Aorta (tissue), 5 donors: ENCODE measurements at regions of chr1 and their contacts with region 1.

Region 1: GRCh38 chr1:66725885-66726665 is 26.2 kb upstream of the DYNLT5 start:
- DNase-seq: peak; percentile 37 to 58
- ATAC-seq: peak; percentile 85
- H3K4me3 ChIP-seq: no peak overlapping the region
- H3K27ac ChIP-seq: no peak overlapping the region
- H3K4me1 ChIP-seq: peaks cover 0 to 3% of the 10 kb centered on the region in 2 donors
- H3K27me3 ChIP-seq: no peaks in the 10 kb centered on the region

Region 2: GRCh38 chr1:66253330-66253921 is 472.6 kb before region 1 on chr1:
- intact Hi-C with region 1: loop called in 1 of 2 experiments (anchors 10 kb)
- DNase-seq: no peak
- ATAC-seq: peak; percentile 91
- H3K4me3 ChIP-seq: no peak overlapping the region
- H3K27ac ChIP-seq: no peak overlapping the region
- H3K4me1 ChIP-seq: no peaks in the 10 kb centered on the region
- H3K27me3 ChIP-seq: no peaks in the 10 kb centered on the region

Region 3: DNA sequence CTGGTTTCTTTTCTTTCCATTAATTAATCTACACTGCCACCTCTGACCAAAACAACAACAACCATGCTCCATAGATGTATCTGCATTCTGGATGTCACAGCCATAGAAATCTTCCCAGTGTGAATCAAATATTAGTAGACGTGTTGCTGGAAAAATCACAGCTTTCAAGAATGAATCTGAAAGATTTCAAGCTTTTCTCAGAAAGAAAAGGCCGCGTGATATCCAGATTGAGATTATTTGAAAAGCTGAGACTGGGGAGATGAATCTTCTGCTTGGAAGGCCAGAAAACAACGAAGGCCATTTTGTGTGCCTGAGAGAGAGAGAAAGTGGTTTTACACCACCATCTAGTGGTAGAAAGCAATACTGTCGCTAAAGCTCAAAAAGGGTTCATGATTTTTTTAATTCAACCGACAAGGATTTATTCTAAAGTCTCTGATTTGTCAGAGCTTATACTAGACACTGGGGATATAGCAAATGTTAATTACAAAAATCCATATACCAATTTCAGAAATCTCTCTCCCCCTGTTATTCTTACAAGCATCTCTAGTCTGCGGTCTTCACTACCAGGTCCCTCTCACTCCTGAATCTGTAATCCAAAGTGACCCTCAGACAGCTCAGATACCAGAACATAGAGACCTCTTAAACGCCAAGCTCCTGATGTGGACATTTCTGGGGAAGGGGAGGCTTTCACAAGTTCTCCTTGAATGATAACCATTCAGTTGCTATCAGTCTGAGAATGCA is 279.6 kb before region 1 on chr1:
- intact Hi-C with region 1: loop called (anchors 5 kb)
- DNase-seq: no peak
- ATAC-seq: peak; percentile 88
- H3K4me3 ChIP-seq: no peak overlapping the region
- H3K27ac ChIP-seq: no peak overlapping the region
- H3K4me1 ChIP-seq: peaks cover 0 to 4% of the 10 kb centered on the region in 2 donors
- H3K27me3 ChIP-seq: no peaks in the 10 kb centered on the region

Region 4: DNA sequence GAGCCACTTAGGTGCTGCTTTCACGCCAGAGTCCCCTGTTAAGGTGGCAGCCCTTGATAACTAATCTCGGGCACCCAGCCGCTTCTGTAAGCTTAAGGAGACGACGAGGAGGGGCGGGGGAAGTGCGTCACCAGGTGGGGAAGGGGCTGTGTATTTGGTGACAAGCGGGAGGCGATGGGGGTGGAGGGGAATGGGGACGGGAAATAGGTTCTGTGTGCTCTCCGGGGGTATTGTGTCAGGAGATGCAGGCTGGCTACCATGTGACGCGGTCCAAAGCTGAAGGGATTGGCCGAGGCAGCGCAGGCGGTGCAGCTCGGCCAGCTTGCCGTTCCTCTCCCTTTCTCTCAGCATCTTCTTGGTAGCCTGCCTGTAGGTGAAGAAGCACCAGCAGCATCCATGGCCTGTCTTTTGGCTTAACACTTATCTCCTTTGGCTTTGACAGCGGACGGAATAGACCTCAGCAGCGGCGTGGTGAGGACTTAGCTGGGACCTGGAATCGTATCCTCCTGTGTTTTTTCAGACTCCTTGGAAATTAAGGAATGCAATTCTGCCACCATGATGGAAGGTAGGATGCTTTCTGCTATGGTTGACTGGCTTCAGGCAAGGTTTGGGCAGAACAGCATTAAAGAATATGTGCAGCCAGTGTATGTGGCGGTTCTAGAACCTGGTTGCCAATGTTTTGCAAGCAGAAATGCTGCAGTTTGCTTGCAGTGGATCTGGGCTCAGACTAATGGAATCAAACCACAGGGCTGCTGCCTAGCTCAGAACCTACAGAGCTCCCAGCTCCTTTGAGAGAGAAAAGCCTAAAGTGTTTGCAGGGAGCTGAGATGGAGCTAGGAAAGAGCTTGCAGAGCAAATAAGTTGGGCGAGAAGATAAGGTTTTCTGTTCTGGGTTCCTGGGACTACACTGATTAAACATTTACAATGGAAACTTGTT is 192.0 kb before region 1 on chr1 and contains the start of gene SGIP1:
- intact Hi-C with region 1: loop called (anchors 5 to 10 kb)
- DNase-seq: peak; percentile 81 to 86
- ATAC-seq: peak; percentile 91
- H3K4me3 ChIP-seq: peak within 1 kb of the TSS; percentile 55 to 80
- H3K27ac ChIP-seq: peak within 1 kb of the TSS; percentile 87 to 94
- H3K4me1 ChIP-seq: peaks cover 2 to 3% of the 10 kb centered on the region in 2 donors
- H3K27me3 ChIP-seq: no peaks in the 10 kb centered on the region
- total RNA-seq, gene SGIP1: 51.8 to 73.2 TPM

Region 5: GRCh38 chr1:66671455-66671854 is 54.6 kb before region 1 on chr1:
- intact Hi-C with region 1: no loop called
- DNase-seq: no peak
- ATAC-seq: no peak
- H3K4me3 ChIP-seq: no peak overlapping the region
- H3K27ac ChIP-seq: no peak overlapping the region
- H3K4me1 ChIP-seq: peaks cover 0 to 5% of the 10 kb centered on the region in 2 donors
- H3K27me3 ChIP-seq: no peaks in the 10 kb centered on the region

Region 6: GRCh38 chr1:66685670-66686069 is 40.4 kb before region 1 on chr1:
- intact Hi-C with region 1: loop called in 1 of 2 experiments (anchors 5 kb)
- DNase-seq: no peak
- ATAC-seq: no peak
- H3K4me3 ChIP-seq: no peak overlapping the region
- H3K27ac ChIP-seq: peak overlapping the region in 1 of 2 donors; percentile 93
- H3K4me1 ChIP-seq: peaks cover 6 to 8% of the 10 kb centered on the region in 2 donors
- H3K27me3 ChIP-seq: no peaks in the 10 kb centered on the region

Region 7: GRCh38 chr1:66764994-66765578 is 39.0 kb after region 1 on chr1:
- intact Hi-C with region 1: no loop called
- DNase-seq: no peak
- ATAC-seq: no peak
- H3K4me3 ChIP-seq: no peak overlapping the region
- H3K27ac ChIP-seq: no peak overlapping the region
- H3K4me1 ChIP-seq: no peaks in the 10 kb centered on the region
- H3K27me3 ChIP-seq: no peaks in the 10 kb centered on the region